WTC11 (cell line): ENCODE measurements at regions of chr17 and their contacts with region 1.

Region 1: DNA sequence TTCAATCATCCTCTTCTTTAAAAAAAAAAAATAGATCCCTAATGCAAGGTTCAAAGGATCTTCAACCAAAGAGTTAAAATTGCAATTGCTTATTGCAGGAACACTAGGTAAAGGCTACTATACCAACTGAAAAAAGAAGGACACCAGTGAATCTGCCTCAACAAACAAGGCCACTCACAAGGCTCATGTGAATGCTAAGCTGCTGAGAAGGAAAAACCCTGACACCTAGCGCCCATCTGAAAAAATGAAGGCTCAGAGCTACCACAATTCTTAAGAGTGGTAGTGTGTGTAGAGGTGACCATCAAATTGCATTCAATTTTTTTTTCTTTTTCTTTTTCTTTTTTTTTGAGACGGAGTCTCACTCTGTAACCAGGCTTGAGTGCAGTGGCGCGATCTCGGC is 201.6 kb upstream of the C17orf78 start:
- DNase-seq: peak; percentile 32
- ATAC-seq: peak; percentile 93
- H3K4me3 Mint-ChIP-seq: no peak overlapping the region
- H3K27ac Mint-ChIP-seq: no peak overlapping the region; the same call in 1 of the 2 replicates
- H3K4me1 Mint-ChIP-seq: peaks cover 43% of the 10 kb centered on the region
- H3K27me3 Mint-ChIP-seq: no peaks in the 10 kb centered on the region
- CTCF ChIP-seq: 0 out of 2 replicates have a peak, but pooled peaks have one; percentile 14

Region 2: DNA sequence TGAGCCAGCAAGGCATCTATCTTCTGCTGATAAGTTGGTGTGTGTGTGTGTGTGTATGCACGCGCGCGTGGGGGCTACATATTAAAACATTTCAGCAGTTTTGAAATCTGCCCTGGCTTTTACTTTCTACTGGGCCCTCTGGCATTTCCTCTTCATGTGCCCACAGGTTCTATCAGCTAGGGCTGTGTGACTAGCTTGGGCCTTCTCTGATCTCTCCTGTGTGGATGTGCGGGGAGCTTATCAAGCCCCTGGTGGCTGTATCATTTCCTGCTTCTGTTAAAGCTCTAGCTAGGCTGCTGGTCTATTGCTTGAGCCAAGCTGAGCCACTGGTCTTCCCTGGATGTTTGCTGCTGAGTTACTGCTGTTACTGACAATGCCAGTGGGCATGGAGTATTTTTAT is 92.9 kb before region 1 on chr17:
- CTCF ChIA-PET with region 1: interaction called, 11 read pairs
- POLR2A ChIA-PET with region 1: no interaction called
- DNase-seq: no peak
- ATAC-seq: peak; percentile 57
- H3K4me3 Mint-ChIP-seq: no peak overlapping the region
- H3K27ac Mint-ChIP-seq: peak overlapping the region; percentile 60; the same call in 1 of the 2 replicates
- H3K4me1 Mint-ChIP-seq: peaks cover 37% of the 10 kb centered on the region
- H3K27me3 Mint-ChIP-seq: no peaks in the 10 kb centered on the region
- CTCF ChIP-seq: no peak

Region 3: GRCh38 chr17:37117373-37118142 is 56.6 kb before region 1 on chr17:
- CTCF ChIA-PET with region 1: interaction called, 16 read pairs
- POLR2A ChIA-PET with region 1: no interaction called
- DNase-seq: no peak
- ATAC-seq: peak; percentile 49
- H3K4me3 Mint-ChIP-seq: no peak overlapping the region
- H3K27ac Mint-ChIP-seq: peak overlapping the region; percentile 82
- H3K4me1 Mint-ChIP-seq: peaks cover 42% of the 10 kb centered on the region
- H3K27me3 Mint-ChIP-seq: no peaks in the 10 kb centered on the region
- CTCF ChIP-seq: no peak

Region 4: GRCh38 chr17:37123941-37124820 is 50.0 kb before region 1 on chr17:
- CTCF ChIA-PET with region 1: interaction called, 16 read pairs
- POLR2A ChIA-PET with region 1: no interaction called
- DNase-seq: no peak
- ATAC-seq: no peak
- H3K4me3 Mint-ChIP-seq: no peak overlapping the region
- H3K27ac Mint-ChIP-seq: peak overlapping the region; percentile 29
- H3K4me1 Mint-ChIP-seq: peaks cover 18% of the 10 kb centered on the region
- H3K27me3 Mint-ChIP-seq: no peaks in the 10 kb centered on the region
- CTCF ChIP-seq: no peak

Region 5: DNA sequence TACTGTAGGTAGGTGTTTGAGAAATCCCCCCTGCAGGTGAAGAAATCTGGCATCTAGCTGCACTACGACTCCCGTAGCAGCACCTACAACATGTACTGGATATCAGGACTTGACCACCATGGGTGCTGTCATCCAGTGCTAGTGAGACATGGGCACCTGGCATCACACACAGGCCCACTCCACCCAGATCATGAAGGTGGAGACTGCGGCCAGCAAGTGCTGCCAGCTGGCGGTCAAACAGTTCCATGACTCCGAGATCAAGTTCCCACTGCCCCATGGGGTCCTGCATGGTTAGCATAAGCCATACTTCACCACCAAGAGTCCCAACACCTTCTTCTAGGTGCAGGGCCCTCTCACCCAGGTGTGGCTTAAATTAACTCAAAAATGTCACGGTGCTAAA is 11.4 kb before region 1 on chr17:
- CTCF ChIA-PET with region 1: interaction called, 18 read pairs
- POLR2A ChIA-PET with region 1: no interaction called
- DNase-seq: peak; percentile 16
- ATAC-seq: no peak
- H3K4me3 Mint-ChIP-seq: no peak overlapping the region
- H3K27ac Mint-ChIP-seq: 0 out of 2 replicates have a peak overlapping the region, but pooled peaks have one; percentile 15
- H3K4me1 Mint-ChIP-seq: peaks cover 6% of the 10 kb centered on the region; the same call in 1 of the 2 replicates
- H3K27me3 Mint-ChIP-seq: no peaks in the 10 kb centered on the region
- CTCF ChIP-seq: no peak

Region 6: GRCh38 chr17:37190493-37190892 is 16.3 kb after region 1 on chr17:
- CTCF ChIA-PET with region 1: interaction called, 35 read pairs
- POLR2A ChIA-PET with region 1: no interaction called
- DNase-seq: no peak
- ATAC-seq: no peak
- H3K4me3 Mint-ChIP-seq: no peak overlapping the region
- H3K27ac Mint-ChIP-seq: no peak overlapping the region
- H3K4me1 Mint-ChIP-seq: peaks cover 6% of the 10 kb centered on the region; the same call in 1 of the 2 replicates
- H3K27me3 Mint-ChIP-seq: no peaks in the 10 kb centered on the region
- CTCF ChIP-seq: no peak

Region 7: GRCh38 chr17:37239690-37240334 is 65.6 kb after region 1 on chr17:
- CTCF ChIA-PET with region 1: interaction called, 25 read pairs
- POLR2A ChIA-PET with region 1: no interaction called
- DNase-seq: no peak
- ATAC-seq: no peak
- H3K4me3 Mint-ChIP-seq: no peak overlapping the region
- H3K27ac Mint-ChIP-seq: no peak overlapping the region
- H3K4me1 Mint-ChIP-seq: no peaks in the 10 kb centered on the region
- H3K27me3 Mint-ChIP-seq: no peaks in the 10 kb centered on the region
- CTCF ChIP-seq: no peak

Region 8: GRCh38 chr17:37683454-37683984 is 509.3 kb after region 1 on chr17:
- CTCF ChIA-PET with region 1: no interaction called
- POLR2A ChIA-PET with region 1: no interaction called
- DNase-seq: no peak
- ATAC-seq: no peak
- H3K4me3 Mint-ChIP-seq: no peak overlapping the region
- H3K27ac Mint-ChIP-seq: no peak overlapping the region
- H3K4me1 Mint-ChIP-seq: no peaks in the 10 kb centered on the region
- H3K27me3 Mint-ChIP-seq: no peaks in the 10 kb centered on the region
- CTCF ChIP-seq: no peak